PC-9 (cell line): ENCODE measurements at regions of chr12 and their contacts with region 1.

Region 1: DNA sequence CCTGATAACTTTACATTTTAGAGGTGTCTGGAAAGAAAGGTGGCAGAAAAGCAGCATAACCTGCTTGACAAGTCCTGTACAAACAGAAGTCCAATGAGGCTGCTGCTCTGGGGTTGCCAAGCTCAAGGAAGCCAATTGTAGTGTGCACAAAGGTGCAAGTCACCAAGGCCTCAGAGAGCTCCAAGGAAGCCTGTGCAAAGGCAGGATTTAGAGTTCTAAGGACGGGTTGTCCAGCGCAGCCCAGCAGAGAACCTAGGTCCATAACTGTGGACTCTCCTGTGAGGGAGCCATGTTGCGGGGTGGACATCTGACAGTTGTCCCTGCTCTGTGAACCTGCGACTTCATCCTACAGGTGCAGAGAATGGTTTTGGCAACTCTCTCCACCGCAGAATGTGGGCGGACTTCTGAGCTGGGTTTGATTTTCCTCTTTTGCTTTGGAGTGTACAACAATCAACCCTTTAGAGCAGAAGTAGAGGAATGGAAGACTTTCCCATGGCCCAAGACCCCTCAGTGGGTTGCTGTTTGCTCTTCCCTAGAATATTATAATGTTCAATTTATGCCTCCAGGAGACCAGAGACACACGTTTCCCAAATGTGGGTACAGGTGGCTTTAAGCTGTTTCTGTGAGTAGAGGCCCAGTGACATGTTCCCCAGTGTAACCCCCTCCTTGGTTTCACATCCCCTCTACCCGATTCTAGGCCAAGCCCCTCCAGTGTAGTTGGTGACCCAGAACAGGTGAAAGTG is 81.0 kb downstream of the ETV6 start:
- DNase-seq: peak; percentile 83 to 96
- H3K4me3 ChIP-seq: peak overlapping the region; percentile 8; the same call in 1 of the 2 replicates
- H3K27ac ChIP-seq: peak overlapping the region; percentile 87
- H3K4me1 ChIP-seq: peaks cover 44% of the 10 kb centered on the region
- H3K27me3 ChIP-seq: no peaks in the 10 kb centered on the region
- CTCF ChIP-seq: no peak

Region 2: GRCh38 chr12:11798856-11799501 is 68.5 kb after region 1 on chr12:
- CTCF ChIA-PET with region 1: no interaction called
- POLR2A ChIA-PET with region 1: interaction called, 4 read pairs
- intact Hi-C with region 1: loop called (anchors 1 kb)
- DNase-seq: peak in 1 of 2 experiments; percentile 78
- H3K4me3 ChIP-seq: no peak overlapping the region
- H3K27ac ChIP-seq: no peak overlapping the region; the same call in 1 of the 2 replicates
- H3K4me1 ChIP-seq: peaks cover 46% of the 10 kb centered on the region
- H3K27me3 ChIP-seq: no peaks in the 10 kb centered on the region
- CTCF ChIP-seq: no peak

Region 3: DNA sequence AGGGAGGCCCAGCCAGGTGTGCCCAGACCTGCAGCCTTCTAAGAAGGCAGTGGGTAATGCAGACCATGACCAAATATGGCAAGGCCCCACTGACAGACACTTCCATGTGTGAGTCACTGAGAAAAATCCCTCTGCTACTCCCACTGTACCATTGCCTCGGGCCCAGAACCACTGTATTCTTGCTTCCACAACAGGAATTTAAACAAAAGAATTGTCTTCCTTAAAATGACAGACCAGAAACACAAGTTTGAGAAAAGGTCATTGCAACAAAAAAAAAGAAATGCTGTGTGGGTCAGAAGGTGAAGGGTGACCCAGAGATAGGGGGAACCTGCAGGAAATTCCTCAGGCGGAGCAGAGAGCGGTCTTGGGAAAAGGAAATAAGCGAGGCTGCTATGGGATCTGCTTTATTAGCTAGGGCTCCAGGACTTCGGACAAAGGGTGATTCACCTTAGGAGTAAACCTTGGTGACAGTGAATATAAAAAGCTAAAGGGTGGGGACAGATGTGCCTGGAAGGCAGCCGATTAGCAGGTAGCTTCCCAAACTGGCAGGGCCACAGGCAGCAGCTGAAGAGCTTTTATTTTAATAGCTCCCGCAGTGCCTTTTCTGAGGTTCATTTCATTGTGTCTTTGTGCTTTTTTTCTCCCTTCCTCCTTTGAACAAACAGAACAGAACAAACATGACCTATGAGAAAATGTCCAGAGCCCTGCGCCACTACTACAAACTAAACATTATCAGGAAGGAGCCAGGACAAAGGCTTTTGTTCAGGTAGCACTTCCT is 155.0 kb after region 1 on chr12:
- CTCF ChIA-PET with region 1: no interaction called
- POLR2A ChIA-PET with region 1: no interaction called
- intact Hi-C with region 1: loop called (anchors 1 kb)
- DNase-seq: peak; percentile 89 to 99
- H3K4me3 ChIP-seq: peak overlapping the region; percentile 35; the same call in 1 of the 2 replicates
- H3K27ac ChIP-seq: peak overlapping the region; percentile 99
- H3K4me1 ChIP-seq: peaks cover 39% of the 10 kb centered on the region
- H3K27me3 ChIP-seq: no peaks in the 10 kb centered on the region
- CTCF ChIP-seq: no peak

Region 4: GRCh38 chr12:12008931-12009611 is 278.6 kb after region 1 on chr12:
- CTCF ChIA-PET with region 1: no interaction called
- POLR2A ChIA-PET with region 1: no interaction called
- intact Hi-C with region 1: loop called (anchors 10 kb)
- DNase-seq: peak; percentile 80 to 98
- H3K4me3 ChIP-seq: no peak overlapping the region
- H3K27ac ChIP-seq: peak overlapping the region; percentile 94
- H3K4me1 ChIP-seq: peaks cover 45% of the 10 kb centered on the region
- H3K27me3 ChIP-seq: no peaks in the 10 kb centered on the region
- CTCF ChIP-seq: no peak; the same call in 1 of the 2 replicates

Region 5: DNA sequence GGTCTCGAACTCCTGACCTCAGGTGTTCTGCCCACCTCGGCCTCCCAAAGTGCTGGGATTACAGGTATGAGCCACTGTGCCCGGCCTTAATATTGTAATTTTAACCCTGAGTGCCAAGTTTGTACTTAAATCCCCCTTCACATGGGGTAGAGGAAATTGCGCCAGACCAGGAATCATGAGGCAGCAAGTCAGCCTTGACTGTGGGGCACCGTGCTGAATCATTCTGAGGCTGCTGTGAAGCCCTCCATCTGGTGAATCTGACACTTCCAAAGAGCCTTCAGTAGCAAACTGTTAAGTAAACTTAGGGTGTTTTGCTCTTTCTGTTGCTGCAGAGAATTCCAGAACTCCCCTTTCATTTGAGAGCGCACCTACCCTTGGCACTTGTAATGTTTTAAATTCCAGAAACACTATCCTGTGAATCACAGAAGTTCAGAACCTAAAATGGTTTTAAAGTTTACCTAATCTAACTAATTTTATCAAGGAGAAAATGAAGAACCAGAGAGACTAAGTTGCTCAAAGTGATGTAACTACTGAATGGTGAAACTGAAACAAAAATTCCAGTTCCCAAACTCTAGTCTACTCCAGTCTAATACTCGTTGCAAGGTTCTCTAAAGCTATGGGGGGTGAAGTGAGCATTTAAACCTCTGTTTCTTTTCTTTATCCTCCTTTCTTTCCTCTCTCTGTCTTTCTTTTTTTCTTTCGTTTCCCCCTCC is 1262.1 kb after region 1 on chr12:
- CTCF ChIA-PET with region 1: interaction called, 10 read pairs
- POLR2A ChIA-PET with region 1: no interaction called
- intact Hi-C with region 1: no loop called
- DNase-seq: peak in 1 of 2 experiments; percentile 37
- H3K4me3 ChIP-seq: no peak overlapping the region
- H3K27ac ChIP-seq: peak overlapping the region; percentile 46
- H3K4me1 ChIP-seq: peaks cover 24% of the 10 kb centered on the region
- H3K27me3 ChIP-seq: no peaks in the 10 kb centered on the region
- CTCF ChIP-seq: no peak